ENCODE measurements at regions of chr18 and their contacts with region 1.

Region 1: DNA sequence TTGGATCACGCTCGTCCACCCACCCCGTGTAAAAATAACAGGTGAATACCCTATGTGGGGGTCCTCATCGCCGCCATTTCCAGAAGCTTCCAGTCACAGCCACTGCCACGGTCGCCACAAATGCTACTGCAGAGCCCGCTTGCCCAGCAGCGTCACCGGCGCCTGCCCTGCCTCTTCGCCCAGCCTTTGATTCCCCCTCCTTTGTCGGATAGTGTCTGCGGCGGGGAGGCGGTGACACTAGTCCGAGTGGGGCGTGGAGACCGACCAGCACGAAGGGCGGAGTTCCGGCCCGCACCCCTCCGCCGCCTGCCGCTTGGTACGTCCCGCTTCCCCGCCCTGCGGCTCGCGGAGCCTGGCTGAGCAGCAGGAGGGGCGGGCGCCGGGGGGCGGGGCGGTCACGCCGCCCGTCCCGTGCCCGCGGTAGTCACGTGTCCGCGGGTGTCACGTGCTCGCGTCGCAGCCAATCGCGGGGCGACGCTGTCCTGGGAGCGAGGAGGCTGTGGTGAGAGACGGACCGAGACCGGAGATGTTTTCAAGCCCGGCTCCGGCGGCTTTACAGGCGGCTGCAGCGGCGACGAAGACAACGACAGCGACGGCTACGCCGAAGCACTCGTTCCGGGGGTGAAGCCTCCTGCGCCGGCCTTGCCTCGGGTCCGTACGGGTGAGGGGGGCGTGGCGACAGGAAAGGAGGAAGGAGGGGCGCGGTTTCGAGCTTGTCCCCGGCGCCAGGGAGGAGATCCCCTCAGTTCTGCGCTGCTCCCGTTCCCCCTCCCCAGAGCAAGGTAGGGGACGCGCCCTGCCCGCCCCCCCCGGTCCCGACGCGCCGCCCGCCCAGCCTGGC is at the start of gene ANKRD12:
- DNase-seq: peak; percentile 93 to 98 (median 96)
- ATAC-seq: peak; percentile 89
- H3K4me3 ChIP-seq: peak within 1 kb of the TSS; percentile 86
- H3K4me3 Mint-ChIP-seq: peak within 1 kb of the TSS; percentile 95 to 99 (median 98)
- H3K27ac ChIP-seq: peak within 1 kb of the TSS; percentile 88
- H3K27ac Mint-ChIP-seq: peak within 1 kb of the TSS; percentile 95 to 99 (median 98)
- H3K4me1 ChIP-seq: peaks cover 42 to 50% of the 10 kb centered on the region in 2 donors
- H3K4me1 Mint-ChIP-seq: peaks cover 45 to 75% (median 69%) of the 10 kb centered on the region in 7 donors
- H3K27me3 ChIP-seq: no peaks in the 10 kb centered on the region
- H3K27me3 Mint-ChIP-seq: no peaks in the 10 kb centered on the region
- total RNA-seq, gene ANKRD12: 98.9 to 274 (median 204) TPM

Region 2: GRCh38 chr18:8389391-8390340 is 746.9 kb before region 1 on chr18:
- CTCF ChIA-PET with region 1: no interaction called
- POLR2A ChIA-PET with region 1: no interaction called
- intact Hi-C with region 1: no loop called
- DNase-seq: peak in 1 of 9 donors; percentile 7
- ATAC-seq: no peak
- H3K4me3 ChIP-seq: no peak overlapping the region
- H3K4me3 Mint-ChIP-seq: no peak overlapping the region
- H3K27ac ChIP-seq: no peak overlapping the region
- H3K27ac Mint-ChIP-seq: peak overlapping the region in 1 of 9 donors; percentile 14
- H3K4me1 ChIP-seq: no peaks in the 10 kb centered on the region
- H3K4me1 Mint-ChIP-seq: no peaks in the 10 kb centered on the region
- H3K27me3 ChIP-seq: no peaks in the 10 kb centered on the region
- H3K27me3 Mint-ChIP-seq: peaks cover 0 to 8% (median 0%) of the 10 kb centered on the region in 5 donors

Region 3: DNA sequence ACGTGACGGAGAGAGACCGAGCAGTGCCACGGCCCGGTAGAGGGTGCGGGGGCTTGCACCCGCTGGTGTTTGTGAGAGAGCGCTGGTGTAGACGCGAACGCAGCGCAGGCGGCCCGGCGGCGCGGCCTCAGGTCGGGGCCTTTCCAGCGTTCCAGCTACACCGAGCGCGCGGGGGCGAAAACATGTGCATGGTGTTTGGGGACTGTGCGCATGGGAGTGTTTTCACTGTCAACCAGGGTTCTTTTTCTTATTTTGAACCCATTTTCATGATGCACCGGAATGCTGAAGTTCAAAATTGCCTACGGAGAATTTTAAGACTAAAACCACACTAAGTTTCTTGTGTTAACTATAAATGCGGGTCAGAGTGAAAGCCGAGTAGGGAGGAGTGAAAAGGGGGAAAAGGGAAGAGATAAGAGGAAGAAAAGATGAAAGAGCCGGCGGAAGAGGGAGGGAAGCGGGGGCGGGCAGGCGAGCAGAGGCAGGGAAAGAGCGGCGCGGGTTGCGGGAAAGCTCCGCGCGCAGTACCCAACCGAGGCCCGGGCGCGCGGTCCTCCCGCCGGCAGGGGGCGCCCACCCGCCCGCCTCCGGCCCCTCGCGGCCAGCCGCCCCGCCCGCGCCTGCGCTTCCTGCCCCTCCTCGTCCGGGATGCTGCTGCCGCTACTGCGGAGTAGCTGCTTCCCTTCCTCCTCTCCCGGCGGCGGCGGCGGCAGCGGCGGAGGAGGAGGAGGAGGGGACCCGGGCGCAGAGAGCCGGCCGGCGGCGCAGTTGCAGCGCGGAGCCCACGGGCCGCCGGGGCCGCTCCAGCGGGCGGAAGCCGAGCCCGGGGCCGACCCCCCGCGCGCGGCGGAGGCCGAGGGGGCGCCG is 527.5 kb before region 1 on chr18 and contains the start of gene RAB12:
- CTCF ChIA-PET with region 1: no interaction called
- POLR2A ChIA-PET with region 1: no interaction called
- intact Hi-C with region 1: loop called in 1 of 2 experiments (anchors 5 kb)
- DNase-seq: peak; percentile 76 to 93 (median 87)
- ATAC-seq: peak; percentile 97
- H3K4me3 ChIP-seq: peak within 1 kb of the TSS; percentile 78
- H3K4me3 Mint-ChIP-seq: peak within 1 kb of the TSS; percentile 88 to 97 (median 94)
- H3K27ac ChIP-seq: peak within 1 kb of the TSS; percentile 76
- H3K27ac Mint-ChIP-seq: peak within 1 kb of the TSS; percentile 91 to 99 (median 96)
- H3K4me1 ChIP-seq: peaks cover 18 to 29% of the 10 kb centered on the region in 2 donors
- H3K4me1 Mint-ChIP-seq: peaks cover 42 to 63% (median 56%) of the 10 kb centered on the region in 7 donors
- H3K27me3 ChIP-seq: no peaks in the 10 kb centered on the region
- H3K27me3 Mint-ChIP-seq: peaks cover 0 to 16% (median 7%) of the 10 kb centered on the region in 5 donors
- total RNA-seq, gene RAB12: 19.8 to 26.2 (median 23.0) TPM

Region 4: GRCh38 chr18:8835521-8835953 is 301.0 kb before region 1 on chr18:
- CTCF ChIA-PET with region 1: no interaction called
- POLR2A ChIA-PET with region 1: no interaction called
- intact Hi-C with region 1: no loop called
- DNase-seq: no peak
- ATAC-seq: no peak
- H3K4me3 ChIP-seq: no peak overlapping the region
- H3K4me3 Mint-ChIP-seq: no peak overlapping the region
- H3K27ac ChIP-seq: no peak overlapping the region
- H3K27ac Mint-ChIP-seq: no peak overlapping the region
- H3K4me1 ChIP-seq: no peaks in the 10 kb centered on the region
- H3K4me1 Mint-ChIP-seq: no peaks in the 10 kb centered on the region
- H3K27me3 ChIP-seq: no peaks in the 10 kb centered on the region
- H3K27me3 Mint-ChIP-seq: peaks cover 0 to 6% (median 0%) of the 10 kb centered on the region in 5 donors

Region 5: DNA sequence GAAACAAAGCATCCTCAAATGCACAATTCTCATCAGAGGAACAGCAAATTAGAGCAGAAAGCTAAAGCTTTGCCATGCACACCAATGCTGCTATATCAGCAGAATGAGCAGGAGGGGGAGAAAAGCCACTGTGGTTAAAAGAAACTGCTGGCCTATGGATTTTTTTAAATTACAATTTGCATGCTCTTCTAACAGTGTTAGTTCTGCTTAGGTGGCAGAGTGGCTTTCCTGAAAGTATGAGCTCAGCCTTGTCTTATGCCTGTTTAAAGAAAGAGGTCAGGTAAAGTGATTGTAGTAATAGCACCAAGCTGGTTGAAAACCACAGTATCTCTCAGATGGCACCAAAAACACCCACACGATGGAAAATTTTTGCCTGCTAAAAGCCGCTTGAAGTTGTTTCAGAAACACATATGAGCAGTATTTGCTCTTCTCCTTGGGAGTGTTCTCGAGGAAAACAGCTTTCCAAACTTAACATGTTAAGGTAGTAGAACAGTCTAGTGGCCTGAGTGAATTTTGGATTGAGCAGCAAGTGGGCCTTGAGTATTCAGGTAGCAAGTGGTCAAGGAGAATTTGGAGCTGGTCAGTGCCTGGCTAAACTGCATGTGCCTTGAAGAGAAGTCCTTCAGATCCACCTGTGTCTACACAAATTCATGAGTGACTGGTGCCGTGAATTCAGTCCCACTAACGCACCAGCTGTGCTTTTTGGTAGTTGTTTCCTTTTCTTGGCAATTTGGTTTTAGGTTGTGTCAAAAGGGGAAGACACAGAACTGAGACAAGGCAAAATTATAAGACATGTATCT is 53.6 kb before region 1 on chr18:
- CTCF ChIA-PET with region 1: interaction called, 3 read pairs
- POLR2A ChIA-PET with region 1: interaction called, 23 read pairs
- intact Hi-C with region 1: loop called (anchors 1 to 2 kb)
- DNase-seq: peak in 8 of 9 donors; percentile 16 to 52 (median 34)
- ATAC-seq: peak; percentile 86
- H3K4me3 ChIP-seq: peak overlapping the region; percentile 18
- H3K4me3 Mint-ChIP-seq: peak overlapping the region; percentile 42 to 88 (median 72)
- H3K27ac ChIP-seq: peak overlapping the region; percentile 76
- H3K27ac Mint-ChIP-seq: peak overlapping the region; percentile 82 to 98 (median 94)
- H3K4me1 ChIP-seq: peaks cover 10 to 19% of the 10 kb centered on the region in 2 donors
- H3K4me1 Mint-ChIP-seq: peaks cover 19 to 51% (median 44%) of the 10 kb centered on the region in 7 donors
- H3K27me3 ChIP-seq: no peaks in the 10 kb centered on the region
- H3K27me3 Mint-ChIP-seq: no peaks in the 10 kb centered on the region

Region 6: DNA sequence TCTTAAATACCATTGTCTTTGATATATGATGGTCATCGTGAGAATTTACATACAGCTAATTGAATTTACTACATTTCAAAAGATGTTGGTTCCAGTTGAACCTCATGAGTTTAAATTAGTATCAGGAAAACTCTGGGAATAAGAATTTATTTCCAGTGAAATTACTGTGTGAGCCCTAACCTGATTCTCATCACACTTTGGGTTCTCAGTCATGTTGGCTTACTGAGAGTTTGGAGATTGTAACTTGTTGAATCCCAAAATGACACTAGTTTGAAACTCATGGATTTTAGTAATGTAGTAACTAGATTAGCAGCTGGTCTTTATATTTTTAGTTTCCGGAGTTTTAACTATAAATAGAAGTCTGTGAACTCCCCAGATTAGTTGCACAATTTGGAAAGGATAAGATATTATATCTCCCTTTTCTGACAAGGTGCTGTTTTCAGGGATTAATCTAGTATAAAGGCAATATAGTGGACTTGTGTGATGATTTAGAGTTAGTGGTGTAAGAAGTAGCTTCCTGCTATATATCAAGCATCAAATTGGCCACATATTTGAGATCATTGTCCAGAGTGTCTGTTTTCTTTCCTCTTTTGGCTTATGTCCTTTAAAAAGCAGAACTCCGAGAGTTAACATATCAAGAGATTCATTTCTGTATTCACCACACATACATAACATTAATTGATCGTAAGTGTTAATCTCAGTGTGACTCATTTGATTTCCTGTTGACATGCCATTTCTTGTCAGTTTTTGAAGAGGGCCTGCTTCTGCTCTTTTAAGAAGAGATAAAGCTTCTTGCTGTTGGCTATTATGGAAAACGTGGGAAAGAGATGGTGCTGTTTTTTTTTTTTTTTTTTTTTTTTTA is 18.3 kb before region 1 on chr18:
- CTCF ChIA-PET with region 1: interaction called, 9 read pairs
- POLR2A ChIA-PET with region 1: interaction called, 472 read pairs
- intact Hi-C with region 1: loop called (anchors 1 kb)
- DNase-seq: peak in 7 of 9 donors; percentile 28 to 66 (median 43)
- ATAC-seq: peak; percentile 72
- H3K4me3 ChIP-seq: peak overlapping the region; percentile 32
- H3K4me3 Mint-ChIP-seq: peak overlapping the region; percentile 56 to 97 (median 82)
- H3K27ac ChIP-seq: peak overlapping the region; percentile 77
- H3K27ac Mint-ChIP-seq: peak overlapping the region; percentile 92 to 98 (median 96)
- H3K4me1 ChIP-seq: peaks cover 52 to 70% of the 10 kb centered on the region in 2 donors
- H3K4me1 Mint-ChIP-seq: peaks cover 51 to 95% (median 87%) of the 10 kb centered on the region in 7 donors
- H3K27me3 ChIP-seq: no peaks in the 10 kb centered on the region
- H3K27me3 Mint-ChIP-seq: no peaks in the 10 kb centered on the region

Region 7: GRCh38 chr18:9321017-9321452 is 184.5 kb after region 1 on chr18:
- CTCF ChIA-PET with region 1: no interaction called
- POLR2A ChIA-PET with region 1: no interaction called
- intact Hi-C with region 1: no loop called
- DNase-seq: no peak
- ATAC-seq: no peak
- H3K4me3 ChIP-seq: no peak overlapping the region
- H3K4me3 Mint-ChIP-seq: no peak overlapping the region
- H3K27ac ChIP-seq: no peak overlapping the region
- H3K27ac Mint-ChIP-seq: no peak overlapping the region
- H3K4me1 ChIP-seq: no peaks in the 10 kb centered on the region
- H3K4me1 Mint-ChIP-seq: peaks cover 0 to 2% (median 0%) of the 10 kb centered on the region in 7 donors
- H3K27me3 ChIP-seq: no peaks in the 10 kb centered on the region
- H3K27me3 Mint-ChIP-seq: peaks cover 7 to 20% (median 20%) of the 10 kb centered on the region in 5 donors

Region 8: DNA sequence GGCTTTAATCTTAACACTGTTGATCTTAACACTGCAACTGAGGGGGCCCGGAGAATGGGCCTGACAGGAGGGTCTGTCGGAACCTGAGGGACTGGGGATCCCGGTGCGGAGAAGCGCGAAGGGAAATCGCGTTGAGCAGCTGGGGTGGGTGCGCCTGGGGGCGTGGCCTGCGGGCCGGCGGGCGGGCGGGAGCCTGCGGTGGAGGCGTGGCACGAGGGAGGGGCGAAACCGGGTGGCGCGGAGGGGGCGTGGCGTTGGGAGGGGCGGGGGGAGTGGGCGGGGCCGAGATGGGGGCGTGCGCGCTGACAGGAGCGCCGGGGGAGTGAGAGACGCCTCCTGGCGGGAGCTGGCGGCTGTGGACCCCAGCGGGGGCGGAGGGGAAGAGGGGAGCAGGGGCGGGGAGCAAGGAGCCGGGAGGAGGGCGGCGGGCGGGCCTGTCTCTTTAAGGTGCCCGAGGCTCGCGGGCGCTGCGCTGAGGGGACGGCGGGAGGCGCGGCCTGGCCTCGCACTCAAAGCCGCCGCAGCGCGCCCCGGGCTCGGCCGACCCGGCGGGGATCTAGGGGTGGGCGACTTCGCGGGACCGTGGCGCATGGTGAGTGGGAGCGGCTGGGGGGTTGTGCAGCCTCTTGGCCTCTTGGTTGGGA is 197.9 kb after region 1 on chr18 and contains the start of gene TWSG1:
- CTCF ChIA-PET with region 1: no interaction called
- POLR2A ChIA-PET with region 1: interaction called, 6 read pairs
- intact Hi-C with region 1: loop called (anchors 1 kb)
- DNase-seq: peak; percentile 86 to 94 (median 90)
- ATAC-seq: peak; percentile 94
- H3K4me3 ChIP-seq: peak within 1 kb of the TSS; percentile 90
- H3K4me3 Mint-ChIP-seq: peak within 1 kb of the TSS; percentile 86 to 94 (median 92)
- H3K27ac ChIP-seq: peak within 1 kb of the TSS; percentile 74
- H3K27ac Mint-ChIP-seq: peak within 1 kb of the TSS; percentile 63 to 97 (median 88)
- H3K4me1 ChIP-seq: peaks cover 0 to 8% of the 10 kb centered on the region in 2 donors
- H3K4me1 Mint-ChIP-seq: peaks cover 1 to 33% (median 24%) of the 10 kb centered on the region in 7 donors
- H3K27me3 ChIP-seq: no peaks in the 10 kb centered on the region
- H3K27me3 Mint-ChIP-seq: peaks cover 0 to 35% (median 0%) of the 10 kb centered on the region in 5 donors
- total RNA-seq, gene TWSG1: 2.4 to 7.6 (median 5.8) TPM